ENCODE measurements at regions of chr1 and their contacts with region 1.

Region 1: DNA sequence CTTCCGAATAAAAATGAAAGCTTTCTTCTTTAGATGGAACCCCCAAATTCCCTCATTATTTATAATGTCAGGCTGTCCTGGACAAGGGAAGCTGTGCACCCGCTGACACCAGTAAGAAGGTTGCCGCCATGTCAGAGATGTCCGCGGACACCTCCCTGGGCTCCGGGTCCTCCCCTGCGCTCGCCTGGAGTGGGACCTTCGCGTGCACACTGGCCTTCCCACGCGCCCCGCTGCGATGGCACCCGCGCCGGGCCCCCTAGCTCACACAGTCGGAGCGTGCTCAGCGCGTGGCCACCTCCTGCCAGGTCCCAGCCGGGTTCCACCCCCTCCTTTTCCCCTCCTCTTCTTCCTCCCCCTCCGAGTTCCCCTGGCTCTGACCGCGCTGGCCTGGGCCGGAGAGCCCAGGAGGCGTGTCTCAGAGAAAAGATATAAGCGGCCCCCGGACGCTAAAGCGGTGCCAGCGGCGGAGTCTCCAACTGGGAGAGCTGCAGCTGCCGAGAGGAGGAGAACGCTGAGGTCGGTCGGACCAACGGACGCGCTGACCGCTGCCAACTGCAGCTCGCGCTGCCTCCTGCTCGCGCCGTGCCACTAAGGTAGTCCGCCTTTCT is at the start of gene G0S2:
- DNase-seq: peak; percentile 76 to 91 (median 87)
- H3K4me3 ChIP-seq: peak within 1 kb of the TSS; percentile 53
- H3K27ac ChIP-seq: peak within 1 kb of the TSS; percentile 6 to 64
- H3K4me1 ChIP-seq: peaks cover 13% of the 10 kb centered on the region
- H3K27me3 ChIP-seq: no peaks in the 10 kb centered on the region
- CTCF ChIP-seq: no peak
- EP300 ChIP-seq: no peak
- POLR2A ChIP-seq: peak; percentile 33
- total RNA-seq, gene G0S2: 61.4 to 392 (median 79.2) TPM

Region 2: DNA sequence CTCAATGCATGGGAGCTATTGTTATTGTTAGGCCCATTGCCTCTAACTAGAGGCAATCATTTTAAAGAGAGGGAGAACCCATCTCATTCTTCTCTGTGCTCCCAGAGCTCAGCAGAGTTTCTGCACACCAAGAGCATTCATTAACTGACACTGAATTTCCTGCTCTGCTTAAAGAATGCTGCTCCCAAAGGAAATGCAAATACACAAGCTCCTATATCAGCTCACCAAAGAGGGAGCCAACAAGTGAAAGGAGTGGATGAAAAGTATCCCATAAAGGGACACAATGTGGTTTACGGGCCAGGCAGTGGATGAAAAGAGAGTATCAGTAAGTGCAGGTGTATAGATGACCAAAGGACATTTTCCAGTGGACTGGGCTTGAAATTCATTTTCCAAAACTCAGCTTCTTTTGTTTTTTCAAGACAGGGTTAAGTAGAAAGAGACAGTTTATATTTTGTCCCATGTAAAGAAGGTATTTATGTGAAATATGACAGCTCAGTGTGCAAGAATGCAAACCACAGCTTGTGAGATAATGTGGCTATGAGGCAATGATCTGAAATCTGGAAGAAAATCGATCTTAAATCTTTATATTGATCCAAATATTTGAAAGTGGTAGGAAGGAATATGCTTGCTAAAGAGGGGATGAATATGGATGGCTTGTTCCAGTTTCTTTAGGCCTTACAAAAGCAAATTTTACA is 299.2 kb before region 1 on chr1:
- intact Hi-C with region 1: no loop called
- DNase-seq: no peak
- H3K4me3 ChIP-seq: no peak overlapping the region
- H3K27ac ChIP-seq: no peak overlapping the region
- H3K4me1 ChIP-seq: no peaks in the 10 kb centered on the region
- H3K27me3 ChIP-seq: no peaks in the 10 kb centered on the region
- CTCF ChIP-seq: no peak
- EP300 ChIP-seq: no peak
- POLR2A ChIP-seq: no peak

Region 3: DNA sequence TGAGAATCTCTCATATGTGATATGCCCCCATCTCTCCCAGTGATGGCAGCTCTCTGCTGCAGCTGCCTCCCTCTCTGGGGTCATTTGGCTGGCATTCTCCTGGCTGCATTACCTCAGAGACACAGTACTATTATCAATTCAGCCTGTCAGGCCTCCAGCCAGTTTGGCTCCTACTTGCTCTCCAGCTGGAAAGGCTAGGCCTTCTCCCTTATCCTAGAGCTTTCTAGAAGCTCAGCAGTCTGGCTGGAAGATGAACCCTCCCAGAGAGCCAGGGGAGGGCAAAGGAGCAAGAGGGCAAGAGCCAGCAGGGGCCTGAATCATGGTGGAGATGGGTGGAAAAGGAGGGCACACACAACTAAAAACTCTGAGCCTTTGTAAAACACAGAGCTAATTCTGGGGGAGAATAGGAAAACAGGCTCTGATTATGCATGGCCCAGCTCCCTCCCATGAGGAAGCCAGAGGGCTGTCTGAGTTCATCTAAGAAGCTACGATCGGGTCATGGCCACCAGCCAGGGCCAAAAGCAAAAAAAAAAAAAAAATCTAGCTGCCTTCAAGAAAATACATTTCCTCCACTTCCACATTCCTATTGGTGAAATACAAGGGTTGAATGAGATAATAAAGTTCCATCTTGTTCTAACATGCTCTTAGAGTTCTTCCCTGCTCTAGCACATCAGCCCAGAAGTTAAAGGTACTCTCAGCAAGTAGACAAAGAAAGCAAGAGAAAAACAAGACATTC is 31.6 kb before region 1 on chr1:
- intact Hi-C with region 1: loop called in 2 of 4 experiments (anchors 5 to 10 kb)
- DNase-seq: peak; percentile 61 to 83 (median 71)
- H3K4me3 ChIP-seq: no peak overlapping the region
- H3K27ac ChIP-seq: peak overlapping the region in 1 of 2 donors; percentile 91
- H3K4me1 ChIP-seq: peaks cover 36% of the 10 kb centered on the region
- H3K27me3 ChIP-seq: no peaks in the 10 kb centered on the region
- CTCF ChIP-seq: no peak
- EP300 ChIP-seq: no peak
- POLR2A ChIP-seq: no peak

Measured in ovary (tissue), 10 donors.